Tibial artery (tissue), 4 donors: ENCODE measurements at regions of chr1 and their contacts with region 1.

Region 1: DNA sequence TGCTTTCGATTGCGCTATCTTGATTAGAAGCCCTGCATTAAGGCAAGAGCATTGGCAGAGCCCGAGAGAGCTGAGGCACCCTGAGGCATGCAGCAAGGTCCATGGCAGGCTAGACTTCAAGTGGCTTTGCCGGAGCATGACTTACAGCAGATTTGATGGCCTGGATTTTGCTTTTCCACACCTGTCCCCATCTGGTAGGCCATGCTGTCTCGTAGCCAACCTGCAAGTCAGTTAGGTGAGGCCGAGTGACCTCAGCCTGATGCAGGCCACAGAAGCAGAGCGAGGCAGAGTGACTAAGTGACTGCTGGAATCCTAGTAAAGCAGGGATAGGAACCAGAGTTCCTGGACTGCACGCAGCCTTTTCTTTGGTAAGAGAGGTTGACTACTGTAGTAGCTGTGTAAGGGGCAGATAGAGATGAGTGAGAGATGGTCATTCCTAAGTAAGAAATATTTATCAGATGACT is 148.9 kb downstream of the PBX1 start:
- DNase-seq: no peak
- H3K4me3 ChIP-seq: no peak overlapping the region
- H3K27ac ChIP-seq: peak overlapping the region; percentile 68 to 70
- H3K4me1 ChIP-seq: peaks cover 0 to 60% (median 41%) of the 10 kb centered on the region in 4 donors
- H3K27me3 ChIP-seq: no peaks in the 10 kb centered on the region
- CTCF ChIP-seq: no peak

Region 2: GRCh38 chr1:164510435-164510834 is 197.5 kb before region 1 on chr1:
- intact Hi-C with region 1: no loop called
- DNase-seq: no peak
- H3K4me3 ChIP-seq: no peak overlapping the region
- H3K27ac ChIP-seq: no peak overlapping the region
- H3K4me1 ChIP-seq: peaks cover 0 to 6% (median 0%) of the 10 kb centered on the region in 4 donors
- H3K27me3 ChIP-seq: no peaks in the 10 kb centered on the region
- CTCF ChIP-seq: peak in 1 of 2 experiments; percentile 6

Region 3: DNA sequence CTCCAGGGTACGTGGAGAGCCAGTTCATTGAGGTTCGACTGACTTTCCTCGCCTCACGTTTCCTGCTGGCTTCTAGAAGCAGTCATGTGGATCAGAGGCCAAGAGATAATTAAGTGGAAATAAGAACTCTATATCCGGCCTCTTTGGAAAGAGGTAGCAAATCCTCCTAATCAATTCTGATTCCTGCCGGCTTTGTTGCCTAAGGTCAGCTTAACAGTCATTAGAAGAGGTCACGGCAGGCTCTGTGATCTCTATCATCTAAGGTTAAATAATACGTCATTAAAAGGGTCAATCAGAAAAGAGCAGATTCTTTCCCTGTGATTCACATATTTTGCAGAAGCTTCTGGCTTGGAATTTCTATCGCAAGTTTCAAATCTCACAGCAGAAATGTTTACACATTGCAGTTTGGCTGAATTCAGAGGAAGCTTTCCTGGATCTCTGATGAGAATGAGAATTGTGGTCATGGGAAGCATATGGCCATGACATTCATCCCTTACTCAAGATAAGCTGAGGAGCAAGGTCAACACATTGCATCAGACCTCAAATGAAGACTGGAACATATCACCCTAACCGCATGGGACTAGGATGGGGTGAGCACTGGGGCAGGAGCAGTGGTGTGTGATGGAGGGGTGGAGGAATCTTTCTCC is 40.5 kb after region 1 on chr1:
- intact Hi-C with region 1: loop called (anchors 5 kb)
- DNase-seq: peak in 1 of 2 donors; percentile 63
- H3K4me3 ChIP-seq: no peak overlapping the region
- H3K27ac ChIP-seq: peak overlapping the region; percentile 59 to 67
- H3K4me1 ChIP-seq: peaks cover 0 to 57% (median 16%) of the 10 kb centered on the region in 4 donors
- H3K27me3 ChIP-seq: no peaks in the 10 kb centered on the region
- CTCF ChIP-seq: no peak

Region 4: DNA sequence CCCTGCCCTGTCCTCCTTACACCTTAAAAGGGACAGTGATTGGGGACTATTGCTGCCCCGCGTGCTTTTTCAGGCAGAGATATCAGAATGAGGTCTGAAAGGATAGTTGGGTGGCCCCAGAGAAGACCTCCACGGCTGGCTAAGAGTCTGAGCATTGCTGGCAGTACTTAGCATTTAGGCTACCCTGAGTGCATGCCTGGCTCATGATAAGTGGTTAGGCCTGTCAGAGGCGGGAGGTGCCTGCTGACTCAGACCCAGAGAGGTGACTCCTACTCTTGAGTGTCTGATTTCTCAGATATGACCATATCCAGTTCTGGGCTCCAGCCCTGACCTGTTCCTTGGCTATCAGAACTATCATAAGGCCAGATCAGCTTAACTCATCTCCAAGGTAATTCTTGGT is 64.7 kb after region 1 on chr1:
- intact Hi-C with region 1: loop called (anchors 10 kb)
- DNase-seq: peak; percentile 79 to 80
- H3K4me3 ChIP-seq: no peak overlapping the region
- H3K27ac ChIP-seq: peak overlapping the region; percentile 72 to 76
- H3K4me1 ChIP-seq: peaks cover 0 to 67% (median 43%) of the 10 kb centered on the region in 4 donors
- H3K27me3 ChIP-seq: no peaks in the 10 kb centered on the region
- CTCF ChIP-seq: no peak